Activated naive CD4-positive, alpha-beta T cell treated with anti-CD3 and anti-CD28 coated beads for 36 hours (primary cell): ENCODE measurements at regions of chr7 and their contacts with region 1.

Region 1: DNA sequence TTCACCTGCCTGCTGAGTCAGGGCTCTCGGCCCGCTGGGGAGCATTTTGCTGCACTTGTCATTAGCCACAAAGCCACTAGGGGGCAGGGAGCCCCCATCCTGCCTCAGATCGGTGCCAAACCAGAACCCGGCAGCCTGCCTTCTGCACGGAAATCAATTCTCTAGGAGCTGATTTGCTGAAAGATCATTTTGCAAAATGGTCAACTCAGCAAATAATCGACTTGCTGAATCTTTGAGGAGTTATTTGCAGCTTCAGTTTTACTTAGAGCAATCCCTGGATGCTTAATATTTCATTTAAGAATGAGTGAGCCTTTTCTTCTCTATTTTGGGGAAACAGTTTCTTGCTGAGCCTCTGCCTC is 1.7 kb upstream of the GIMAP8 start:
- DNase-seq: peak; percentile 95
- H3K4me3 Mint-ChIP-seq: peak overlapping the region; percentile 98
- H3K27ac Mint-ChIP-seq: peak overlapping the region; percentile 99
- H3K4me1 Mint-ChIP-seq: peaks cover 42% of the 10 kb centered on the region
- H3K27me3 Mint-ChIP-seq: no peaks in the 10 kb centered on the region

Region 2: DNA sequence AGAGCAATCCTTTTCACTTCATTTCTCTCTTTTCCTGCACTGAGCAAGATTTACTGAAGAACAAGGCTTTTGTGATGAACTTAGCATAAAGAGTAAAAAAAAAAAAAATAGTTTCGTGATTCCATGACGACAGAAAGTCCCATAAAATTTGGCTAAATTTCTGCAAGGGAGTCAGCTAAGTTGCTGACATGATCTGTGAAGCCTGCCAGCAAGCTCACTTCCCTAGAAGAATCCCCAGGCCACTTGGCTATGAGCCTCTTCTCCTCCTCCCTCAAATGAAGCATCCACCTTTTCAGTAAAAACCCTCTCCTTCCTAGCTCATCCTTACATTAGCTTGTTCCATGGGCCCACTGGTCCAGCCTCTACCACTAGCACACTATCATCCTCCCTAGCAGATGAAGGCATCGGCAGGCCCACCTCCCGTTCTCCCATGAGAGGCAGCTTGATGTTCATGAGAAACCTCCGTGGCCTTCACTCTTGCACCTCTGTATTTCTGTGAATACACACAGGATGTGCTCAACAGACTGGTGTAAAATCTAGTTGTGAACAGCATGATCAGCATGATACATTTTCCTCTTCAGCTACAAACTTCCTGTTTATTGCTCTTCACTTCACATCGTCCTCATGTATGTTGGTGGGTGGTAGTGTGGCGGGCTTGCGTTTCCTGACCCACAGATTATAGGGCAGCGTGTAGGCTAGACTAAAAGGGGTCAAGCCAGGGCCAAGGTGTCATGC is 32.6 kb after region 1 on chr7:
- CTCF ChIA-PET with region 1: interaction called, 6 read pairs
- intact Hi-C with region 1: loop called (anchors 1 kb)
- DNase-seq: peak; percentile 67
- H3K4me3 Mint-ChIP-seq: peak overlapping the region; percentile 69
- H3K27ac Mint-ChIP-seq: peak overlapping the region; percentile 97
- H3K4me1 Mint-ChIP-seq: peaks cover 93% of the 10 kb centered on the region
- H3K27me3 Mint-ChIP-seq: no peaks in the 10 kb centered on the region

Region 3: GRCh38 chr7:150514748-150515222 is 66.0 kb after region 1 on chr7 and contains the start of gene GIMAP7:
- CTCF ChIA-PET with region 1: interaction called, 41 read pairs
- intact Hi-C with region 1: loop called (anchors 1 kb)
- DNase-seq: peak; percentile 70
- H3K4me3 Mint-ChIP-seq: peak within 1 kb of the TSS; percentile 96
- H3K27ac Mint-ChIP-seq: peak within 1 kb of the TSS; percentile 98
- H3K4me1 Mint-ChIP-seq: peaks cover 49% of the 10 kb centered on the region
- H3K27me3 Mint-ChIP-seq: no peaks in the 10 kb centered on the region
- total RNA-seq, gene GIMAP7: 41.6 TPM

Region 4: GRCh38 chr7:150620617-150621371 is 172.0 kb after region 1 on chr7:
- CTCF ChIA-PET with region 1: interaction called, 3 read pairs
- intact Hi-C with region 1: loop called (anchors 2 kb)
- DNase-seq: peak; percentile 10
- H3K4me3 Mint-ChIP-seq: peak overlapping the region; percentile 8
- H3K27ac Mint-ChIP-seq: peak overlapping the region; percentile 82
- H3K4me1 Mint-ChIP-seq: peaks cover 53% of the 10 kb centered on the region
- H3K27me3 Mint-ChIP-seq: no peaks in the 10 kb centered on the region

Region 5: DNA sequence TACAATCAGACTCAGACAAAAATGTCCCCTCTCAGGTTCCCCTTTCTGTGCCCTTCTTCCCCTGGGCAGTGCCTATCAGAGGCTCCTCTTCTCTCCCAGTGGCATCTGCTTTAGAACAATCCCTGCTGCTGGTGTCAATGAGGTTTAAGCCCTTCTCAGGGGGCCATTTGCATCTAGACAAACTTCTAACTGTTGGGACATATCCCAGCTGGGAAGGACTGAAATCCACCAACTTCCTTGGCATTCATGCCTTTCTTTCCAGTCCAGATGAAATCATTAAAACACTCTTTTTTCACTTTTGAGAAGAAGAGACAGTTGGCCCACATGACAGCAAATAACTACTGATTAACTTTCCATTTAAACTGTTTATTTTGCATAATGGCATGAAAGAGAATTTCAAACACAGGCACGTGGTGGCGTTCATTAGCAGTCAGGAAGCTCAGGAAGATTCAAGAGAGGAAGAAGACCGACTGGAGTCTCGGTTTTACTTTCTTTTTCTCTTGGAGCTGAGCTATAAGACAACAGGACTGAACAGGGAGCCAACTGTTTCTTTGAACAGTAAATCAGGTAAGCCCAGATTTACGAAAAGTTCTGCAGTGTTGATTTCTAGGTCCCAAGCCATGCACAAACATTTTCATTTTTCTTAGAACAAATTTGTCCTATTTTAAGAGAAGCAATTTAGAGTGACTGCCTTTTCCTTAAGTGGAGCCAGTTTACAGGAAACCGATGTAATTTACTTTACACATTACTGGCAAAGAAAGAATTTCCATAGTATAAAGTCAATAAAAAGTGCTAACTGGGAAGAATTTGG is 236.7 kb after region 1 on chr7 and contains the start of gene GIMAP2:
- CTCF ChIA-PET with region 1: interaction called, 7 read pairs
- intact Hi-C with region 1: loop called (anchors 1 kb)
- DNase-seq: peak; percentile 56
- H3K4me3 Mint-ChIP-seq: peak within 1 kb of the TSS; percentile 93
- H3K27ac Mint-ChIP-seq: peak within 1 kb of the TSS; percentile 98
- H3K4me1 Mint-ChIP-seq: peaks cover 73% of the 10 kb centered on the region
- H3K27me3 Mint-ChIP-seq: no peaks in the 10 kb centered on the region
- total RNA-seq, gene GIMAP2: 45.0 to 49.5 TPM

Region 6: DNA sequence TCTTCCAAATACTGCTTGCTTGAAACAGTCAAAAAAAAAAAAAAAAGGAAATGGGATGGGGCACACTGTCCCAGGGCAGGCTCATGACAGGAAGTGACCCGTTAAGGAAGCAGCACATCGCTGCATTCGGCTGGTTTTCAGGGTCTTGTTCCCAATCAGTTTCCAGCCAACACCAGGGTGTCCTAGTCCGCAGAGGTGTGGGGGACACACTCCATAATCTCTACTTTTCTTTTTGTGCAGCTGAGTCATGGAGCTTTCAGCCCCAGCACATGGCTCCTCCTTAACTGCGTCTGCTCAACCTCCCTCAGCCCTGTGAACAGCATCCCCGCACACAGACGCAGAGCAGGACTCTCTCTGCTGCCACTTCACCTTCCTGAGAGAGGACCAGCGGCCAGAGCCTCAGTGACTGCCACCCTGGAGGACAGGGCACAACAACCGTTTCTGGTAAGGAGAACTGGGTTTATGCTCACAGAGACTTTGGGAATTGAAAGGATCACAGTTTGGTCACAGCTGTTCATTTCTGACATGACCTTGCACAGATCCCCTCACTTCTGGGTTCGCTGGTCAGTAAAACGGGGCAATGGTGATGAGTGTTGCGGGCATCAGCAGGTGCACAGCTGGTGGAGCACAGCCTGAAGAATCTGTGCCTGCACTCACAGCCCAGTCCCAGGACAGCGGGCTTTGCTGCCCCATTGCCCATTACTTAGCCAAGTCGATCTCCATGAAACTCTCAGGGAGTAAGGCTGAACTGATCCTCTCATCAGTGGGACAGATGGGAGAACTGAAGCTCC is 288.7 kb after region 1 on chr7 and contains the start of gene GIMAP5:
- CTCF ChIA-PET with region 1: interaction called, 11 read pairs
- intact Hi-C with region 1: loop called (anchors 1 kb)
- DNase-seq: peak; percentile 66
- H3K4me3 Mint-ChIP-seq: peak within 1 kb of the TSS; percentile 88
- H3K27ac Mint-ChIP-seq: peak within 1 kb of the TSS; percentile 95
- H3K4me1 Mint-ChIP-seq: peaks cover 72% of the 10 kb centered on the region
- H3K27me3 Mint-ChIP-seq: no peaks in the 10 kb centered on the region
- total RNA-seq, gene GIMAP5: 32.1 to 32.3 TPM